Gastrocnemius medialis (tissue), 4 donors: ENCODE measurements at regions of chr13 and their contacts with region 1.

Region 1: DNA sequence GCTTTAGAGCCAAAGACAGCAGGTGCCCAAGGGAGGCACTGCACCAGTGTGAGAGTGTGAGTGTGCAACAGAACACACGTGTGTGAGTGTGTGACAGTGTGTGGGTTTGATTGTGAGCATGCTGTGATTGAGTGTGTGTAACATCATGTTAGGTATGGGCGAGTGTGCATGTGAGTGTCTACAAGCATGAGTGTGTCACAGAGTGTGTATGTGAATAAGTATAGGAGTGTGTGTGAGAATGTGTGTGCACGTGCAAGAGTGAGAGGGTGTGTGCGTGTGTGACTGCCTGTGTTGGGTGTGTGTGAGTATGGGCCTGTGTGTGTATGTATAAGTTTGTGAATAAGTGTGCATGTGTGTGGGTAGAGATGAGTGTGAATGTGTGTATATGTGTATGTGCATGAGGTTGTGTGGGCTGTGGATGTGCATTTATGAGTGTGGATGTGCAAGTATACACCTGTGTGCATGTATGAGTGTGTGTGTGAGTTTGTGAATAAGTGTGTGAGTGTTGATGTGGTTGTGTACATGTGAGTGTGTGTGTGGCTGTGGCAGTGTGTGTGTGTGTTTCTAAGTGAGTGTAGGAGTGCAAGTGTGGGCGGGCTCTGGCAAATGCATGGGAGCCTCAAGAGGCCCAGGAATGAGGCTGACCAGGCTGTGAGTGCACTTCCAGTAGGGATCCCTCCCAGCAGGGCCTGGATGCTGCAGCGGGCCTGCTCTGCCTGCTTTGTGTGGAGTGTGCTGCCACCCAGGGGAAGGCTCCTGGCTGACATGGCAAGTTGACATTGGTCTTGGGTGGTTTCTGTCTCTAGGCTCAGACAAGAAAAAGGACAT is 198.4 kb downstream of the COL4A1 start:
- DNase-seq: peak; percentile 73 to 86
- ATAC-seq: peak; percentile 49 to 61
- H3K4me3 ChIP-seq: no peak overlapping the region
- H3K27ac ChIP-seq: peak overlapping the region; percentile 77 to 88 (median 82)
- H3K4me1 ChIP-seq: peaks cover 31 to 36% of the 10 kb centered on the region in 2 donors
- H3K27me3 ChIP-seq: no peaks in the 10 kb centered on the region
- CTCF ChIP-seq: peak; percentile 60 to 74 (median 66)
- POLR2A ChIP-seq: no peak

Region 2: DNA sequence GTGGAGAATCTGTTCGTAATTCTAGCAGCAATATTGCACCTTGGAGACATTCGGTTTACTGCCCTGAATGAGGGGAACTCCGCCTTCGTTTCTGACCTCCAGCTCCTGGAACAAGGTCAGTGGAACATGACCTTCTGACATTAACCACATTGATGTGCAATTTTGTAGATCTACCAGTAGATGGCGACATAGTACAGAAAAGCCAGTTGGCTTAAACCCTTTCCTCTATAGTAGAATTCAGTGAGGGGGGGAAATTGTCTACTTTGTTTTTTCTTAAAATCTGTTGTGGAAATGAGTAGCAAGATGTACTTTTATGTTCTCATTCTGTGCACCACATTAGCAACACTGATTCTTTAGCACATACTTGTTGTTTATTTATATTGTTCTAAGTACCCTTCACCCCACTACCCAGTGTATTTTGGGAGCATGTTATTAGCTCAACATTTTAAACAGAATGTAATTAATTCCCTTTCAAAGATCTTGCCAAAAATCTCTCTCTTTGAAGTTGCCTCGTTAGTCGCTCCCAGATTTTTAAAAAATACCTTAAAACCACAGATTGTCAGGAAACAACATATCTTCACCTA is 1146.9 kb before region 1 on chr13:
- in situ Hi-C with region 1: loop called (anchors 10 to 25 kb)
- intact Hi-C with region 1: loop called (anchors 5 kb)
- DNase-seq: no peak
- ATAC-seq: peak; percentile 79 to 89
- H3K4me3 ChIP-seq: no peak overlapping the region
- H3K27ac ChIP-seq: no peak overlapping the region
- H3K4me1 ChIP-seq: no peaks in the 10 kb centered on the region
- H3K27me3 ChIP-seq: no peaks in the 10 kb centered on the region
- CTCF ChIP-seq: peak; percentile 58 to 87 (median 75)
- POLR2A ChIP-seq: no peak

Region 3: DNA sequence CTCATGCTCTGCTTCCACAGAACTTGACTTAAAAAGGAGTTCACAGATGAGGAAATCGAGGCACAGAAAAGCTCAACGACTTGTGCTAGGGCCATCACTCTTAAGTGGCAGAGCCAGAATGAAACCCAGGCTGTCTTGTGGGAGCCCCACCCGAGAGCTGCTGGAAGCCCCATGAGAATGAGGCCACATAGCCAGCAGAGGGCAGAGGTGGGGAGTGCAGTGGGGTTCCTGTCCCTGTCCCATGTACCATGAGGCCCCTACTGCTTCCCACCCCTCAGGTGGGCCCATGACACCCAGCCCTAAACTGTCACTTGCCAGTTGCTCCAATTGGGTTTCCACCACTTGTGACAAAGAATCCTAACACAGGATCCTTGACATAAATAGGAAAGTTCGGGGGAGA is 498.0 kb before region 1 on chr13:
- in situ Hi-C with region 1: no loop called
- intact Hi-C with region 1: loop called (anchors 5 kb)
- DNase-seq: peak in 1 of 2 donors; percentile 25
- ATAC-seq: no peak
- H3K4me3 ChIP-seq: no peak overlapping the region
- H3K27ac ChIP-seq: no peak overlapping the region
- H3K4me1 ChIP-seq: no peaks in the 10 kb centered on the region
- H3K27me3 ChIP-seq: no peaks in the 10 kb centered on the region
- CTCF ChIP-seq: peak in 3 of 5 experiments; percentile 20 to 43 (median 33)
- POLR2A ChIP-seq: no peak

Region 4: GRCh38 chr13:109786457-109787134 is 322.0 kb before region 1 on chr13 and contains the start of gene IRS2:
- in situ Hi-C with region 1: loop called in 2 of 4 experiments (anchors 25 kb)
- intact Hi-C with region 1: loop called (anchors 2 kb)
- DNase-seq: peak; percentile 94 to 95
- ATAC-seq: peak; percentile 83 to 87
- H3K4me3 ChIP-seq: peak within 1 kb of the TSS; percentile 74 to 86 (median 82)
- H3K27ac ChIP-seq: peak within 1 kb of the TSS; percentile 85 to 94 (median 89)
- H3K4me1 ChIP-seq: peaks cover 0 to 21% of the 10 kb centered on the region in 2 donors
- H3K27me3 ChIP-seq: peaks cover 0 to 3% (median 0%) of the 10 kb centered on the region in 3 donors
- CTCF ChIP-seq: no peak
- POLR2A ChIP-seq: peak; percentile 99
- total RNA-seq, gene IRS2: 23.8 to 65.6 (median 28.7) TPM

Region 5: GRCh38 chr13:109918179-109918711 is 190.3 kb before region 1 on chr13:
- in situ Hi-C with region 1: no loop called
- intact Hi-C with region 1: loop called (anchors 5 kb)
- DNase-seq: peak; percentile 84 to 92
- ATAC-seq: peak; percentile 99
- H3K4me3 ChIP-seq: no peak overlapping the region
- H3K27ac ChIP-seq: peak overlapping the region; percentile 73 to 81 (median 77)
- H3K4me1 ChIP-seq: peaks cover 4 to 11% of the 10 kb centered on the region in 2 donors
- H3K27me3 ChIP-seq: no peaks in the 10 kb centered on the region
- CTCF ChIP-seq: peak in 1 of 5 experiments; percentile 14
- POLR2A ChIP-seq: peak in 1 of 2 donors; percentile 21

Region 6: DNA sequence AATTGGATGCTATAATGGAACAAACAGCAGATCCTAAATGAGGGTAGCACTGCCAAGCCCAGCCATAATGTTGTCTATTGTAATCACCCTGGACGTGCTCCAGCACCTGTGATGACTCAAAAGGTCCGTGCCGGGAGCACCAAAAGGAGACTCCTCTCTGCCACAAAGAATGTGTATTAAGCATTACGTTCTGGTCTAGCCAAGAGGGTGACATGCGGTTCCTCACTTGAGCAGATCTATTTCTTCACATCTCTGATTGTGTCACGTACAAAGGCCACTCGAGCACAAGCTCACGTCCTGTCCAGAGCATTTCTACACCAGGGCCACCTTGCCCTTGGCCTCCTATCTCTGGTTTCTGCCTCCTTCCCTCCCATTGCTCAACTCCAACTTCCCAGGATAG is 102.3 kb before region 1 on chr13:
- in situ Hi-C with region 1: no loop called
- intact Hi-C with region 1: loop called (anchors 5 kb)
- DNase-seq: peak; percentile 51 to 71
- ATAC-seq: peak; percentile 71 to 89
- H3K4me3 ChIP-seq: no peak overlapping the region
- H3K27ac ChIP-seq: peak overlapping the region; percentile 24 to 73 (median 42)
- H3K4me1 ChIP-seq: peaks cover 0 to 4% of the 10 kb centered on the region in 2 donors
- H3K27me3 ChIP-seq: no peaks in the 10 kb centered on the region
- CTCF ChIP-seq: no peak
- POLR2A ChIP-seq: no peak

Region 7: DNA sequence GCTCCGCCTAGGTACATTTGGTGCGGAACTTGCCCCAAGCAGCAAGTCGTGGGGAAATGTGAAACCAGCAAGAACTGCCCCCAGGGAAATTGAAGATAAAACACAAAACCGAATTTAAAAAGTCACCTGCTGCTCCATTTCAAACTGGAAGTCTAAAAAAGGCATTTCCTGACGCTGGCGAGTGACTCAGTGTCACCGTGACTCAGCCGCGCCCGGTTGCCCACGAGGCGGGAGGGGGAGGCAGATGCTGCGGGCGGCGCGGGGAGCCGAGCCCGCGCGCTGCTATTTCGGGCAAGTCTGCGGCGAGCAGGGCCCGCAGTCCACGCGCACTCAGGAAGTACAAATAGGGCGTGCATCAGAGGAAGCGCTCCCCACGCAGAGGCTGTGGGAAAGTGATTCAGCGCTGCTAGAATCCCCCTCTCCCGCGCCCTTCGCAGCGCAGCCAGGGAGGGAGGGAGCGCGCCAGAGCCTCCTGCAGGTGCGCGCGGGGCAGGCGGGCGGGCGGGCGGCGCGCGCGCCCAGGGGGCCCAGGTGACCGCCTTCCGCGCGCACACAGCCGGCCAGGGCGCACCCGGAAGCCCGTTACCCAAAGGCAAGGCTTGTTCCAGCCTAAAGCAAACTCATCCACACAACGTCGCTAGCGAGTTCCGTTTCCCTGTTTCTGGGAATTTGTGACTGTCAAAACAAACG is 29.6 kb after region 1 on chr13:
- in situ Hi-C with region 1: no loop called
- intact Hi-C with region 1: loop called (anchors 1 kb)
- DNase-seq: peak; percentile 72 to 75
- ATAC-seq: peak; percentile 67 to 68
- H3K4me3 ChIP-seq: peak overlapping the region; percentile 53 to 81 (median 60)
- H3K27ac ChIP-seq: peak overlapping the region; percentile 85 to 95 (median 89)
- H3K4me1 ChIP-seq: peaks cover 41 to 43% of the 10 kb centered on the region in 2 donors
- H3K27me3 ChIP-seq: no peaks in the 10 kb centered on the region
- CTCF ChIP-seq: peak in 2 of 5 experiments; percentile 14 to 17
- POLR2A ChIP-seq: peak; percentile 55 to 65

Region 8: DNA sequence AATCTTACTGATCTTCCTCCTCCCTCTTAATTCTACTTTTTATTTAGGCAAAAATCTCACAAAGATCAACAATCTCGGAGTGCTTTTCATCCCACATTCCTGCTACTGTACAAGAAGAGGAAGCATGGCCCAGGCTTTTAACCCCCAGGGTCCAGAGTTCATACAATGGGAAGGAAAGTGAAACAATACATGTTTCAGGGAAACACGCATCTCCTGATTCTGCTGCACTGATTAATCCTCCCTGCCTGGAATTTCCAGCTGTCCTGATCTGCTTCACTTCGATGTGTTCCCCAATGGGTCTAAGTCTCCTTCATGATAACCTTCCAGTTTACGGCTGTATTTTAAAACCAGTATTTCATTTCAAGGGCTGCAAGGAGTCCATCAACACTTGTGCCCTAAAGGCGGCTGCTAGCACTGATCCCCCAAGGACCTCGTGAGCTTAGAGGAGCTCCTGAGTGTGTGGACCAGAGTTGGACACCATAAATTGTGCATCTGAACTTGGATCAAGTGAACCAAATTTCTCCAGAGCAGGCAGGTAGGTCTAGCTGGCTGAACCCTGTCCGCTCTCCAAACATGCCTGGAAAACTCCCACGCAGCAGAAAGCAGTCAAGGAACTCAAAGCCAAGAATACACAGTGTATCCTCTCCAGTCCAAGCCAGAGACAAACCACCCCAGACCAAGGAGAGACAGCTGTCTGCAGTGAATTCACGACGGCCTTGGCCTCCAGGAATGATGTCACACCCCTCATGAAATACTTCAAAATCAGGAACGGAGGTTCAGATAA is 154.1 kb after region 1 on chr13:
- in situ Hi-C with region 1: no loop called
- intact Hi-C with region 1: no loop called
- DNase-seq: no peak
- ATAC-seq: no peak
- H3K4me3 ChIP-seq: no peak overlapping the region
- H3K27ac ChIP-seq: peak overlapping the region; percentile 48 to 70 (median 68)
- H3K4me1 ChIP-seq: peaks cover 50 to 61% of the 10 kb centered on the region in 2 donors
- H3K27me3 ChIP-seq: peaks cover 0 to 17% (median 10%) of the 10 kb centered on the region in 3 donors
- CTCF ChIP-seq: no peak
- POLR2A ChIP-seq: no peak